ENCODE measurements at regions of chr15 and their contacts with region 1.

Region 1: GRCh38 chr15:89893696-89894455 is at the start of gene AP3S2:
- DNase-seq: peak; percentile 94
- H3K4me3 Mint-ChIP-seq: peak within 1 kb of the TSS; percentile 97
- H3K27ac Mint-ChIP-seq: peak within 1 kb of the TSS; percentile 96
- H3K4me1 Mint-ChIP-seq: peaks cover 42% of the 10 kb centered on the region
- H3K27me3 Mint-ChIP-seq: no peaks in the 10 kb centered on the region
- total RNA-seq, gene AP3S2: 20.2 to 25.2 TPM

Region 2: GRCh38 chr15:89575146-89575655 is 318.7 kb before region 1 on chr15 and contains the start of gene TICRR:
- CTCF ChIA-PET with region 1: no interaction called
- intact Hi-C with region 1: loop called (anchors 5 kb)
- DNase-seq: peak; percentile 98
- H3K4me3 Mint-ChIP-seq: peak within 1 kb of the TSS; percentile 86
- H3K27ac Mint-ChIP-seq: peak within 1 kb of the TSS; percentile 28
- H3K4me1 Mint-ChIP-seq: peaks cover 18% of the 10 kb centered on the region
- H3K27me3 Mint-ChIP-seq: peaks cover 4% of the 10 kb centered on the region
- total RNA-seq, gene TICRR: 20.7 to 21.0 TPM

Region 3: GRCh38 chr15:89874926-89875564 is 18.8 kb before region 1 on chr15:
- CTCF ChIA-PET with region 1: interaction called, 10 read pairs
- intact Hi-C with region 1: no loop called
- DNase-seq: peak; percentile 90
- H3K4me3 Mint-ChIP-seq: no peak overlapping the region
- H3K27ac Mint-ChIP-seq: no peak overlapping the region
- H3K4me1 Mint-ChIP-seq: peaks cover 3% of the 10 kb centered on the region
- H3K27me3 Mint-ChIP-seq: no peaks in the 10 kb centered on the region

Region 4: DNA sequence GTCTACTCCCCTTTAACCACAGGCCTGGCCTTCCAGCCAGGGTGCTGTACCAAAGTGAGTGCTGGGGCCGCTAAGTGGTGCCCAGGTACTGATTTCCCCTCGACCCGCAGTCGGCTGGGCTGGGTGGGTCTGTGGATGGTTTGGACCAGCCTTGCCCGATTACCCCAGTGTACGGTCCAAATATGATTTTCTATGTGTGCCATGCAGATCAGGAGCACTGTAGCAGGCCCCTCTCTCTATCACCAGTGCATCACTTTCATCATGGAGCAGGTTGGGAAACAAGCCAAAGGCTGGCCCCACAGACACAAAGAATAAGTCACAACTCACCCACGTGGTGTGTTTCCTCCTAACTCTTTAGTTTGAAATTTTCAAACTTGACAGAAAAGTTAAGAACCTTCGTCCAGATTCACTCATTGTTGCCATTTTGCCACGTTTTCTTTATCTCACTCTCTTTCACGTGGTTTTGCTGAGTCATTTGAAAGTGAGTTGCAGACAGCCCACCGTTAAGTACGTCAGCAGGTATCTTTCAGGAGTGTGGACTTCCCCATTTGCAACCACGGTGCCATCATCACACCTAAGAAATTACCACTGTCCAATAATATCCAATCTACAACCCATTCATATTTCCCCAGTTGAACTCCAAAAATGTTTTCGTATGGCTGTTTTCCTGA is 144.2 kb after region 1 on chr15:
- CTCF ChIA-PET with region 1: no interaction called
- intact Hi-C with region 1: loop called (anchors 1 kb)
- DNase-seq: peak; percentile 86
- H3K4me3 Mint-ChIP-seq: no peak overlapping the region
- H3K27ac Mint-ChIP-seq: peak overlapping the region; percentile 92
- H3K4me1 Mint-ChIP-seq: peaks cover 69% of the 10 kb centered on the region
- H3K27me3 Mint-ChIP-seq: no peaks in the 10 kb centered on the region

Region 5: DNA sequence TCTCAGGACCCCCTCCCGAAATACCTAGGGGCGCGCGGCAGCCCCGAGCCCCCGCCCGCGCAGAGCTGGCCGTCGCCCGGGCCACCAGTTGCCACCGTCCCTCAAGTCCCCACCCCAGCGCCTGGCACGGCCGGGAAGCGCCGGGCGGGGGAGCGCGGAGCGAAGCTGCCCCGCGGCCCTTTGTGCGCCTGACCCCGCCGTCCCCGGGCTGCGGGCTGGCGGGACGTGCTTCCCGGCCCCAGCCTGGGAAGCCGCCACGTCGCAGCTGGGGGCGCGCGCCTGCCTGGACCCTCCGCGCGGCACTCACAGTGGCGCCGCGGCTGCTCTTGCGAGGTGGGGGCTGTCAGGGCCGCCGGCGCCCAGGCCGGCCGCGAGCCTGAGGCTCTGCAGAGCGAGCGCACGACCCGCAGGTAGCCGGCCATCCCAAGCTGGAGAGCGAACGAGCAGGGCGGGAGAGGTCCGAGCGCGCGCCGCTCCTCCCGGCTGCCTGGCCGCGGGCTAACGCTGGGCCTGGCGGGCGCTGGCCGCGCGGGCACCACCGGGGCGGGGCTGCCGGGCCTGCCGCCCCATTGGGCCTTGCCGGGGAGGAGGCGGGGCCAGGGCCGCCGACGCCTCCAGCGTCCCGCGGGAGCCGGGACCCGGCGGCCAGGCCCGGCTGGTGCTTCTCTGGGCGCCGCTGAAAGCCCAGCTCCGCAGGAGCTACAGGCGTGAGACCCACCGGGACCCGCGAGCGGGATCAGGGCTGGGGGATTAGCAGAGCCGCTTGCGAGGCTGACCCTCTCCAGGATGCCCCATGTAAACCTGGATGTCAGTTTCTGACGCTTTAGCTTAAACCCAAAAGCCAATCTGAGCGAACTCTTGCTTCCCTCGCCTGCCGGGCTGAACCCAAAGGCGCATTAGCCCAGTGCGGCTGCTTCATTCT is 208.4 kb after region 1 on chr15 and contains the start of gene IDH2:
- CTCF ChIA-PET with region 1: interaction called, 7 read pairs
- intact Hi-C with region 1: loop called (anchors 1 kb)
- DNase-seq: peak; percentile 64
- H3K4me3 Mint-ChIP-seq: peak within 1 kb of the TSS; percentile 91
- H3K27ac Mint-ChIP-seq: peak within 1 kb of the TSS; percentile 90
- H3K4me1 Mint-ChIP-seq: peaks cover 46% of the 10 kb centered on the region
- H3K27me3 Mint-ChIP-seq: no peaks in the 10 kb centered on the region
- total RNA-seq, gene IDH2: 225 to 229 TPM